ENCODE measurements at regions of chr16 and their contacts with region 1.

Region 1: DNA sequence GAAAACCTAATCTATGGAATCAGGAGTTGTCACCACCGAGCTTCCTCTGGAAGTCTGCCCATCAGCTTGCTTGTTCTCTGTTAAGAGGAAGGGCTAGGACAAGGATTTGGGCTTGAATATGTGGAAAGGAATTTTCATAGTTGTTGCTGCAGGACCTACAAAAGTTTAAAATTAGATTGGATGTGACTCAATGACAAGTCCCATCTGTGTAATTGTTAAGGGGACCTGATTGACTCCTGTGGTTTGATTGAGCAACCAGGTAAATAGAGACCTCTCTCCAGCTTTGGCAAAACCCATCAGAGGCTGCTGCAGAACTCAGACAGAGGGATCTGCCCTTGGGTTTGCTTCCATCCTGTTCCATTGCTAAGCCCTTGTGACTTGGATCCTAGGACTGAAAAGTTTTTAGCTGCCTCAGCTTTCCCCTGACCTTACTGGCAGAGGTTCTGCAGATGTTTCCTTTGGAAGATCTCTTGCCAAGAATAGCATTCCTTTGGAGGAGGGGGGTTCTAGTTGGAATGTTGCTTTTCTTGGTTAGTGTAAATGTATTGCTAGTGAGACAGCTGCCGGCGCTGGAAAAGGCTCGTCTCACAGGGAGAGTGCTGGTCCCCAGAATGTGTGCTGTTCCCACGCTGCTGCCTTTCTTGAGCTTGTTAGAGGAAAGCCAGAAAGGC is 50.0 kb downstream of the SF3B3 start:
- DNase-seq: peak; percentile 17
- H3K4me3 ChIP-seq: no peak overlapping the region
- H3K27ac ChIP-seq: peak overlapping the region; percentile 58
- H3K4me1 ChIP-seq: peaks cover 17% of the 10 kb centered on the region
- H3K27me3 ChIP-seq: no peaks in the 10 kb centered on the region
- CTCF ChIP-seq: no peak

Region 2: GRCh38 chr16:70534971-70535370 is 38.6 kb before region 1 on chr16:
- CTCF ChIA-PET with region 1: no interaction called
- POLR2A ChIA-PET with region 1: no interaction called
- intact Hi-C with region 1: loop called (anchors 5 kb)
- DNase-seq: no peak
- H3K4me3 ChIP-seq: no peak overlapping the region
- H3K27ac ChIP-seq: no peak overlapping the region
- H3K4me1 ChIP-seq: no peaks in the 10 kb centered on the region
- H3K27me3 ChIP-seq: no peaks in the 10 kb centered on the region
- CTCF ChIP-seq: no peak

Measured in A673 (cell line).